Cardiac septum (tissue), 1 donor: ENCODE measurements at regions of chr2 and their contacts with region 1.

Region 1: DNA sequence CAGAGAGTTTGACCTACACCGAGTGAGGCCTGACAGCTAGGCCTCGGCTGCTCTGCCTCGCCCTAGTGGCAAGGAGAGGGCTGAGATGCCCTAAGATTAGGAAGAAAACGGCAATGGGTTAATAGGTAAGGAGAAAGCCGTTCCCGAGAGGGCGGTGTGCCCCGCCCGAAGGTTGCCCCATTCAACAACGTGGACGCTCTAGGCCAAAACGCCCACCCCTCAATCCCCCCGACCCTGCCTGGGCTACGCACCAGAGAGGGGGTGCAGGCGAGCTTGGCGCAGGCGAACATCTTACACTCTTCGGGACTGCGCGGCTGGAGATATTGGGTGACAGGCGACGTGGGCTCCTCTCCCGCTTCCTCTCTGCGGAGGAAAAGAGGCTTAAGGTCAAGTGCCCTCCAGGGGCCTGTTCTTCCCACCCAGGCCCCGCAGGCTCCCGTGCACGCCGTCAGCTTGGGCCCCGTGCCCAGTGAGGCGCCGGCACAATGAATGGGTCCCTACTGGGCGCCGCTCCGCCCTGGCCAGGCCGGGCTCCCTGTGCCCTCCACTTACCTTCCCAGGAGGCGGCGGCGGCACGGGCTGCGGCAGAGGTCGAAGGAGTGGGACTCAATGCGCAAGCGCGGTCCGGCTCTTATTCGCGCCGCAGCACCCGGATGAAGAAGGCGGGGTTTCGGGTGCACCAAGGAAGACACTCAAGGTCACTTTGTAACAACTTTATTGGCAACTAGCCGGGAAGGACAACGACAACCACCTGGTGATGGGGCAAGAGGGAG is at the start of gene ATP5MC3:
- DNase-seq: peak; percentile 96
- total RNA-seq, gene ATP5MC3: 814 TPM

Region 2: GRCh38 chr2:175030380-175031271 is 150.7 kb before region 1 on chr2:
- intact Hi-C with region 1: loop called (anchors 10 kb)
- DNase-seq: no peak

Region 3: DNA sequence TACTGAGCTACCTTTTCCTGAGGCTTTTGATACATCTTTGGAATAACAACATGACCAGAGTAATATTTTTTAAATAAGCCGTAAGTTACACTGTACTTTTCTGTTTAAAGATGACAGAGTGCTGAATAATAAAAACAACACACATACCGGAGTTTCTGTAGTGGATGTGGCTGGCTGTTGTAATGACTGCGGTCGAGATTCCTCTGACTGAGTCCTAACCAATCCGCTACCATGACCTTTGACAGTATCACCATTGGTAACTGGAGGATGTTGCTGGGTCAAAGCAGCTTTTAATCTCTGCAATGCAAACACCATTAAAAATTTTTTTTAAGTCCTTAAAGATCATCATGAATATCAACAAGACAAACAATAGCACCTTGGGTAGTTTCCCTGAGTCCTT is 84.0 kb before region 1 on chr2:
- intact Hi-C with region 1: no loop called
- DNase-seq: no peak

Region 4: GRCh38 chr2:175111200-175111657 is 70.1 kb before region 1 on chr2:
- intact Hi-C with region 1: loop called (anchors 5 kb)
- DNase-seq: no peak

Region 5: GRCh38 chr2:175167792-175168563 is 13.3 kb before region 1 on chr2 and contains the start of gene ATF2:
- intact Hi-C with region 1: loop called (anchors 1 kb)
- DNase-seq: peak; percentile 99
- total RNA-seq, gene ATF2: 27.4 TPM